Ascending aorta (tissue), 2 donors: ENCODE measurements at regions of chr3 and their contacts with region 1.

Region 1: DNA sequence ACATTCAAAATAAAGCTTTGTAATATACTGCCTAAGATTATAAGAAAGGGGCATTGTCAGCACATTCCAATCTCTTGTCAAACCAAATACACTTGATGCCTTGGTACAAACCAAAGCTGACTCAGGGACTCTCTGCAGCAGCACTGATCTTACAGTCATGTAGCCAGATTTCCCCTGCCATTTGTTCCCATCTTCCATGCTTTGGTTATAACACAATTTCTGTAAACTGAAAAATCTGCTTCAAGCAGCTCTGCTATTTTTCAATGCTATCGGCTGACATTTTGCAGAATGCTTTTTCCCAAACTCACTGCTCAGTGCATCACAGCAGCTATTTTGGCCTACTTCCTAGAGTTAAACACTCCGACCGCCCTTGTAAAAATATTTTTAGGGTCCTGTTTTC is 18.2 kb downstream of the PLOD2 start:
- DNase-seq: no peak
- H3K4me3 ChIP-seq: peak overlapping the region in 1 of 2 donors; percentile 48
- H3K27ac ChIP-seq: peak overlapping the region; percentile 7 to 10
- H3K4me1 ChIP-seq: peaks cover 2 to 62% of the 10 kb centered on the region in 2 donors
- H3K27me3 ChIP-seq: no peaks in the 10 kb centered on the region
- CTCF ChIP-seq: no peak

Region 2: DNA sequence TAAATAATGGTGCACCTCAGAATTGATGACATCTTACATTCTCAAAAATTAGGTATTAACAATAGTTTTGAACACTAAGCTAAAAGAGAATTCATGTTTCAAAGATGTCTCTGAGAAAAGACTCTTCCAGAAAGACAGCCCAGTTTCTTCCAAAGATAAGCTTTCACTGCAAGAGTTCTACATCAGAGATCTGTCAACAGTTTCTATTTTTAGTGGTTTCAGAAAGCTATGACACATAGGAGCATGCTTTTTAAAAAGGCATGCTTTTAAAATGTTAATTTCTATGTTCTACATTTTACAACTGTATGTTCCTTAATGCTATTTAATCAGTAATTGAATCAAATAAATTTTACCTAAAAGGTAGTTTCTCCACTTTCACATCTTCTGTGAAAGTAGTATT is 69.9 kb before region 1 on chr3:
- intact Hi-C with region 1: loop called (anchors 5 kb)
- DNase-seq: no peak
- H3K4me3 ChIP-seq: no peak overlapping the region
- H3K27ac ChIP-seq: peak overlapping the region in 1 of 2 donors; percentile 16
- H3K4me1 ChIP-seq: peaks cover 0 to 8% of the 10 kb centered on the region in 2 donors
- H3K27me3 ChIP-seq: no peaks in the 10 kb centered on the region
- CTCF ChIP-seq: no peak